ENCODE measurements at regions of chr5 and their contacts with region 1.

Region 1: DNA sequence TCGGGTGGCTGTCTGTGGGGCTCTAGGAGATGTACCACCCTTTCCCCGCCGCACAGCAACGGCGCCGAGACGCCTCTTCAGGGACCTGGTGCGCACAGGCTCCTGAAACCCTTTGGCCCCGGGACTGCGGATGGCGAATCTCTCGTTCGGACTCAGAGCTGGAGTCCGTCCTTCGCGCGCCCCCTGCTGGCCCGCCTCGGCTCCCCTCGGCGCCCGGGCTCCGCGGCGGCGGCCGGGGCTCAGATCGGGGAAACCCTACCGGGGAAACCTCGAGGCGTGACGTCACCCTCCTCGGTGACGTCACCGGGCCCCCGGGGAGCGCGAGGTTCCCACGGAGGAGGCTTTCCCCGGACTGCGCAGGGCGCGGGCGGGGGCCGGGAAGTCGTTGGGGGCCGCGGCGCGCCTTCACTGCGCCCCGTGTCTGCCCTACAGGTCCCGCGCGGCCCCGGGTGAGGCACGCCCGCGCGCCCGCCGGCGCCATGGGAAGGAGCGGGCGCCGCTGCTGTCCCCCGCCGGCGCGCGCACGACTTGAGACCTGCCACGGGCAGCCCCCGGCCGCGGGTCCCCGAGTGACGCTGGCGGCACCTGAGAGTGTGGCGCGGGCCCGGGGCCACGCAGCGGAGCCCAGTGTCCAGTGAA is 7.9 kb downstream of the PRR7 start:
- DNase-seq: peak; percentile 90 to 98 (median 94)
- ATAC-seq: peak; percentile 55
- H3K4me3 ChIP-seq: peak overlapping the region; percentile 64 to 93
- H3K4me3 Mint-ChIP-seq: peak overlapping the region; percentile 86
- H3K27ac ChIP-seq: peak overlapping the region; percentile 88 to 96
- H3K27ac Mint-ChIP-seq: peak overlapping the region; percentile 85
- H3K4me1 ChIP-seq: peaks cover 16% of the 10 kb centered on the region
- H3K4me1 Mint-ChIP-seq: peaks cover 18% of the 10 kb centered on the region
- H3K27me3 ChIP-seq: no peaks in the 10 kb centered on the region
- H3K27me3 Mint-ChIP-seq: no peaks in the 10 kb centered on the region
- CTCF ChIP-seq: peak; percentile 84

Region 2: GRCh38 chr5:177317959-177318377 is 136.5 kb before region 1 on chr5:
- CTCF ChIA-PET with region 1: interaction called, 18 read pairs
- POLR2A ChIA-PET with region 1: interaction called, 3 read pairs
- intact Hi-C with region 1: loop called (anchors 1 to 2 kb)
- DNase-seq: peak; percentile 52 to 85 (median 75)
- ATAC-seq: peak; percentile 81
- H3K4me3 ChIP-seq: no peak overlapping the region
- H3K4me3 Mint-ChIP-seq: no peak overlapping the region
- H3K27ac ChIP-seq: no peak overlapping the region
- H3K27ac Mint-ChIP-seq: no peak overlapping the region
- H3K4me1 ChIP-seq: peaks cover 10% of the 10 kb centered on the region
- H3K4me1 Mint-ChIP-seq: peaks cover 14% of the 10 kb centered on the region
- H3K27me3 ChIP-seq: no peaks in the 10 kb centered on the region
- H3K27me3 Mint-ChIP-seq: no peaks in the 10 kb centered on the region
- CTCF ChIP-seq: peak; percentile 90

Region 3: DNA sequence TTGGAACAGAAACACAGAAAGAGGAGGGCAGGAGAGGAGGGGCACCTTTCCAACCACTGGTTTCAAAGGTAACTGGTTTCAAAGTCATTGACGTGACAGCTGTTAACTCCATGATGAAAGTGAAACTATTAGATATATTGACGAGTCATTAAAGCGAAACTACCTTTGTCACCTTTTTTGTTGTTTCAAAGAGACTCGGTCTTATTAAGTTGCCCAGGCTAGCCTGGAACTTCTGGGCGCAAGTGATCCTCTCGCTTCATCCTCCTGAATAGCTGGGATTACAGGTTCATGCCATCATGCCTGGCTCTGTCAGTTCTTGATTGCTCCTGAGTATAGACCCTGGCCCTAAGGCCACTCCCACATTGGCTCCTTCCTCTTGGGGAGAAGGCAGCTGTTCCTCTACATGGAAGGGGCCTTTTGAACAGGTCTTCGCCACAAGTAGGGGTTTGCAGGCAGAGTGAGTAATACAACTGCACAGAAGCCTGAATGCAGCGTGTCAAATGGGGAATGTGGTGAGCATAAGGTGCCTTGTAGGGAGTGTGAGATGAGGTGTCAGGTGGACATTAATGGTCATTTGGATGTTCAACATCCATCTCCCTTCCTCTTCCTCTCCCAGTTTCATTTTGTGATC is 41.8 kb before region 1 on chr5:
- CTCF ChIA-PET with region 1: interaction called, 628 read pairs
- POLR2A ChIA-PET with region 1: interaction called, 185 read pairs
- intact Hi-C with region 1: no loop called
- DNase-seq: peak in 2 of 9 experiments; percentile 64 to 81
- ATAC-seq: peak; percentile 55
- H3K4me3 ChIP-seq: peak overlapping the region in 1 of 2 experiments; percentile 32
- H3K4me3 Mint-ChIP-seq: peak overlapping the region; percentile 72
- H3K27ac ChIP-seq: peak overlapping the region in 1 of 2 experiments; percentile 75
- H3K27ac Mint-ChIP-seq: peak overlapping the region; percentile 79
- H3K4me1 ChIP-seq: peaks cover 17% of the 10 kb centered on the region
- H3K4me1 Mint-ChIP-seq: peaks cover 37% of the 10 kb centered on the region
- H3K27me3 ChIP-seq: no peaks in the 10 kb centered on the region
- H3K27me3 Mint-ChIP-seq: no peaks in the 10 kb centered on the region
- CTCF ChIP-seq: no peak

Region 4: GRCh38 chr5:177425801-177426565 is 28.5 kb before region 1 on chr5:
- CTCF ChIA-PET with region 1: interaction called, 285 read pairs
- POLR2A ChIA-PET with region 1: interaction called, 498 read pairs
- intact Hi-C with region 1: loop called (anchors 1 kb)
- DNase-seq: peak; percentile 99 to 100 (median 99)
- ATAC-seq: peak; percentile 80
- H3K4me3 ChIP-seq: peak overlapping the region; percentile 63 to 65
- H3K4me3 Mint-ChIP-seq: peak overlapping the region; percentile 91
- H3K27ac ChIP-seq: peak overlapping the region; percentile 86 to 92
- H3K27ac Mint-ChIP-seq: peak overlapping the region; percentile 98
- H3K4me1 ChIP-seq: peaks cover 46% of the 10 kb centered on the region
- H3K4me1 Mint-ChIP-seq: peaks cover 53% of the 10 kb centered on the region
- H3K27me3 ChIP-seq: no peaks in the 10 kb centered on the region
- H3K27me3 Mint-ChIP-seq: no peaks in the 10 kb centered on the region
- CTCF ChIP-seq: no peak

Region 5: GRCh38 chr5:177431317-177432142 is 23.0 kb before region 1 on chr5:
- CTCF ChIA-PET with region 1: interaction called, 285 read pairs
- POLR2A ChIA-PET with region 1: interaction called, 498 read pairs
- intact Hi-C with region 1: loop called (anchors 1 kb)
- DNase-seq: peak in 8 of 9 experiments; percentile 59 to 93 (median 78)
- ATAC-seq: peak; percentile 44
- H3K4me3 ChIP-seq: peak overlapping the region; percentile 37 to 98
- H3K4me3 Mint-ChIP-seq: peak overlapping the region; percentile 91
- H3K27ac ChIP-seq: peak overlapping the region; percentile 69 to 89
- H3K27ac Mint-ChIP-seq: peak overlapping the region; percentile 91
- H3K4me1 ChIP-seq: peaks cover 91% of the 10 kb centered on the region
- H3K4me1 Mint-ChIP-seq: peaks cover 66% of the 10 kb centered on the region
- H3K27me3 ChIP-seq: no peaks in the 10 kb centered on the region
- H3K27me3 Mint-ChIP-seq: no peaks in the 10 kb centered on the region
- CTCF ChIP-seq: no peak

Region 6: GRCh38 chr5:177473461-177474001 is 19.0 kb after region 1 on chr5 and contains the start of gene DBN1:
- CTCF ChIA-PET with region 1: interaction called, 20 read pairs
- POLR2A ChIA-PET with region 1: interaction called, 18 read pairs
- intact Hi-C with region 1: loop called in 1 of 2 experiments (anchors 1 kb)
- DNase-seq: peak in 2 of 9 experiments; percentile 53
- ATAC-seq: peak; percentile 27
- H3K4me3 ChIP-seq: peak within 1 kb of the TSS; percentile 50 to 67
- H3K4me3 Mint-ChIP-seq: peak within 1 kb of the TSS; percentile 80
- H3K27ac ChIP-seq: peak within 1 kb of the TSS; percentile 30 to 53
- H3K27ac Mint-ChIP-seq: peak within 1 kb of the TSS; percentile 82
- H3K4me1 ChIP-seq: peaks cover 43% of the 10 kb centered on the region
- H3K4me1 Mint-ChIP-seq: peaks cover 52% of the 10 kb centered on the region
- H3K27me3 ChIP-seq: no peaks in the 10 kb centered on the region
- H3K27me3 Mint-ChIP-seq: no peaks in the 10 kb centered on the region
- CTCF ChIP-seq: no peak
- total RNA-seq, gene DBN1: 16.2 to 19.9 TPM

Region 7: GRCh38 chr5:177478711-177479646 is 24.5 kb after region 1 on chr5:
- CTCF ChIA-PET with region 1: interaction called, 15 read pairs
- POLR2A ChIA-PET with region 1: interaction called, 4 read pairs
- intact Hi-C with region 1: no loop called
- DNase-seq: peak in 5 of 9 experiments; percentile 32 to 75 (median 58)
- ATAC-seq: peak; percentile 87
- H3K4me3 ChIP-seq: no peak overlapping the region
- H3K4me3 Mint-ChIP-seq: peak overlapping the region; percentile 37
- H3K27ac ChIP-seq: peak overlapping the region; percentile 21 to 68
- H3K27ac Mint-ChIP-seq: peak overlapping the region; percentile 92
- H3K4me1 ChIP-seq: peaks cover 35% of the 10 kb centered on the region
- H3K4me1 Mint-ChIP-seq: peaks cover 45% of the 10 kb centered on the region
- H3K27me3 ChIP-seq: no peaks in the 10 kb centered on the region
- H3K27me3 Mint-ChIP-seq: no peaks in the 10 kb centered on the region
- CTCF ChIP-seq: no peak

Measured in CD8-positive, alpha-beta T cell (primary cell).